PC-3 (cell line): ENCODE measurements at regions of chr5 and their contacts with region 1.

Region 1: GRCh38 chr5:171397190-171397589 is 9.5 kb downstream of the NPM1 start:
- DNase-seq: no peak
- ATAC-seq: peak; percentile 6; the same call in 1 of the 2 replicates
- H3K4me3 ChIP-seq: no peak overlapping the region
- H3K27ac ChIP-seq: no peak overlapping the region
- H3K4me1 ChIP-seq: no peaks in the 10 kb centered on the region; the same call in 1 of the 2 replicates
- H3K27me3 ChIP-seq: no peaks in the 10 kb centered on the region
- CTCF ChIP-seq: no peak

Region 2: GRCh38 chr5:170818232-170818631 is 579.0 kb before region 1 on chr5:
- CTCF ChIA-PET with region 1: no interaction called
- POLR2A ChIA-PET with region 1: no interaction called
- intact Hi-C with region 1: no loop called
- DNase-seq: no peak
- ATAC-seq: no peak
- H3K4me3 ChIP-seq: no peak overlapping the region
- H3K27ac ChIP-seq: no peak overlapping the region
- H3K4me1 ChIP-seq: no peaks in the 10 kb centered on the region
- H3K27me3 ChIP-seq: no peaks in the 10 kb centered on the region
- CTCF ChIP-seq: no peak

Region 3: DNA sequence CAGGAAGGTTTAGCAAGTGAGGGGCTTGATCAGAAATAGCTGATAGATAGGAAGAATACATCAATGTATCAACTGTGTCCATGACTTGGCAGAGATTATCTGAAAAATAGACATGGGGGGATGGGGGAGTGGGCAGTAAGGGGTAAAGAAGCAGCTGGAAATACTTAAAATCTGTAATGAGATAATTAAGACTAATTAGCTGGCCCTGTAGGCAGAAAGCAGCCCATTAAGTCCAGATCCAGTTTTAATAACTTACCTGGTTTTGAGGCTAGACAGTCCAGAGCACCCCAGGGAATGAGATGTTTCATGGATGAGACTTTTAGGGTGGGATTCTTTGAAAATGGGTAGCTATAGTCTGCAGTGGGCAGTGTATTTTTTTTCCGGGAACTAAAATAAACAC is 205.1 kb before region 1 on chr5:
- CTCF ChIA-PET with region 1: no interaction called
- POLR2A ChIA-PET with region 1: no interaction called
- intact Hi-C with region 1: no loop called
- DNase-seq: no peak
- ATAC-seq: no peak
- H3K4me3 ChIP-seq: no peak overlapping the region
- H3K27ac ChIP-seq: no peak overlapping the region
- H3K4me1 ChIP-seq: no peaks in the 10 kb centered on the region
- H3K27me3 ChIP-seq: no peaks in the 10 kb centered on the region
- CTCF ChIP-seq: no peak

Region 4: DNA sequence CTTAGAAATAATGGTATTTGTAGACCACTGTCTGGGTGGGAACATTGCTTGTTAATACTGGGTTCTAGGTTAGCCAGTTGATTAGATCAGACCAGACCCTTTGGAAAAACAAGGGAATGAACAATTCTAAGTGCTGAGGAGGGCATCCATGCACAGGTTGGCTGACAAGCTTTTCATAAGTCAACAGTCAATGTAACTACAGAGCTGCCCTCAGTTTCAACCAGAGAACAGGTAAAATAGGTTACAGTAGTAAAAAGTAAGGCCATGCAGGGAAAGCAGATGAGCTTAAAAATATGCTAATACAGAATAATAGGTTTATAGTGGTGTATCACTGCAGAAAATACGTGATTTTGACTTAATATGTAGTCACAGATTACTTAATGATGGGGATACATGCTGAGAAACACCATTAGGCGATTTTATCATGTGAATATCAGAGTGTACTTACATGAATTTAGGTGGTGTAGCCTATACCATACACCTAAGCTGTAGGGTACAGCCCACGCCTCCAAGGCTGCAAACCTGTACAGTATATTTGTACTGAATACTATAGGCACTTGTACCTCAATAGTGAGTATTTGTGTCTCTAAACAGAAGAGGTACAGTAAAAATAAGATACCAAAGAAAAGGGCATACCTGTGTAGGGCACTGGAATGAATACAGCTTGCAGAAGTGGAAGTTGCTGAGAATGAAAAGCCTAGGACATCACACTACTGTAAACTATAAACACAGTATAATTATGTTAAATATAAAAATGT is 16.1 kb after region 1 on chr5:
- CTCF ChIA-PET with region 1: no interaction called
- POLR2A ChIA-PET with region 1: no interaction called
- intact Hi-C with region 1: loop called (anchors 2 kb)
- DNase-seq: peak; percentile 29
- ATAC-seq: no peak
- H3K4me3 ChIP-seq: no peak overlapping the region
- H3K27ac ChIP-seq: no peak overlapping the region
- H3K4me1 ChIP-seq: no peaks in the 10 kb centered on the region; the same call in 1 of the 2 replicates
- H3K27me3 ChIP-seq: no peaks in the 10 kb centered on the region
- CTCF ChIP-seq: no peak